HepG2 (cell line): ENCODE measurements at regions of chr7 and their contacts with region 1.

Region 1: DNA sequence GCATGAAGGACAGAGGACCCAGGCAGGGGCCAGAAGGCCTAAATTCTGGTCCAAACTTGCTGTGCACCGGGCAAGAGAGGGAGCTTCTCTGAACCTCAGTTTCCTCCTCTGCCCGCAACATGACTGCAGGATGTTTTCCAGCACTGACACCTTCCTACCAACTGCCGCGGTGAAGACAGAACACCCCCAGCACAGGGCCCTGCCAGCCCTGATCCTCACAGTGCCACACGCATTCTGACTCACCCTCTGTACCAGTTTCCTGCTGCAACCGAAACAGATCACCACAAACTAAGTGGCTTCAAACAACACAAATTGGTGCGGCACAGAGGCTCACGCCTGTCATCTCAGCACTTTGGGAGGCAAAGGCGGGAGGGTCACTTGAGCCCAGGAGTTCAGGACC is 18.1 kb downstream of the MAD1L1 start:
- DNase-seq: no peak
- ATAC-seq: no peak
- H3K4me3 ChIP-seq: no peak overlapping the region
- H3K27ac ChIP-seq: no peak overlapping the region
- H3K4me1 ChIP-seq: no peaks in the 10 kb centered on the region
- H3K27me3 ChIP-seq: no peaks in the 10 kb centered on the region
- CTCF ChIP-seq: no peak
- EP300 ChIP-seq: no peak
- POLR2A ChIP-seq: no peak
- RAD21 ChIP-seq: no peak

Region 2: GRCh38 chr7:1794888-1795542 is 419.6 kb before region 1 on chr7:
- CTCF ChIA-PET with region 1: interaction called, 3 read pairs
- POLR2A ChIA-PET with region 1: no interaction called
- in situ Hi-C with region 1: loop called (anchors 10 kb)
- intact Hi-C with region 1: no loop called
- DNase-seq: peak; percentile 49
- ATAC-seq: peak; percentile 29; the same call in 1 of the 3 replicates
- H3K4me3 ChIP-seq: no peak overlapping the region
- H3K27ac ChIP-seq: no peak overlapping the region
- H3K4me1 ChIP-seq: peaks cover 16% of the 10 kb centered on the region
- H3K27me3 ChIP-seq: no peaks in the 10 kb centered on the region
- CTCF ChIP-seq: peak; percentile 84
- EP300 ChIP-seq: no peak
- POLR2A ChIP-seq: no peak
- RAD21 ChIP-seq: peak; percentile 61; the same call in 1 of the 2 replicates